ENCODE measurements at regions of chr12 and their contacts with region 1.

Region 1: GRCh38 chr12:56987551-56988053 is 18.7 kb downstream of the ZBTB39 start:
- DNase-seq: peak; percentile 60 to 96 (median 82)
- ATAC-seq: peak; percentile 89
- H3K4me3 ChIP-seq: no peak overlapping the region
- H3K27ac ChIP-seq: no peak overlapping the region
- H3K4me1 ChIP-seq: peaks cover 7 to 41% of the 10 kb centered on the region in 2 donors
- H3K27me3 ChIP-seq: no peaks in the 10 kb centered on the region
- CTCF ChIP-seq: peak; percentile 91 to 95

Region 2: GRCh38 chr12:56759263-56759908 is 228.2 kb before region 1 on chr12:
- intact Hi-C with region 1: loop called in 1 of 2 experiments (anchors 5 kb)
- DNase-seq: no peak
- ATAC-seq: no peak
- H3K4me3 ChIP-seq: no peak overlapping the region
- H3K27ac ChIP-seq: no peak overlapping the region
- H3K4me1 ChIP-seq: peaks cover 0 to 2% of the 10 kb centered on the region in 2 donors
- H3K27me3 ChIP-seq: no peaks in the 10 kb centered on the region
- CTCF ChIP-seq: no peak

Region 3: DNA sequence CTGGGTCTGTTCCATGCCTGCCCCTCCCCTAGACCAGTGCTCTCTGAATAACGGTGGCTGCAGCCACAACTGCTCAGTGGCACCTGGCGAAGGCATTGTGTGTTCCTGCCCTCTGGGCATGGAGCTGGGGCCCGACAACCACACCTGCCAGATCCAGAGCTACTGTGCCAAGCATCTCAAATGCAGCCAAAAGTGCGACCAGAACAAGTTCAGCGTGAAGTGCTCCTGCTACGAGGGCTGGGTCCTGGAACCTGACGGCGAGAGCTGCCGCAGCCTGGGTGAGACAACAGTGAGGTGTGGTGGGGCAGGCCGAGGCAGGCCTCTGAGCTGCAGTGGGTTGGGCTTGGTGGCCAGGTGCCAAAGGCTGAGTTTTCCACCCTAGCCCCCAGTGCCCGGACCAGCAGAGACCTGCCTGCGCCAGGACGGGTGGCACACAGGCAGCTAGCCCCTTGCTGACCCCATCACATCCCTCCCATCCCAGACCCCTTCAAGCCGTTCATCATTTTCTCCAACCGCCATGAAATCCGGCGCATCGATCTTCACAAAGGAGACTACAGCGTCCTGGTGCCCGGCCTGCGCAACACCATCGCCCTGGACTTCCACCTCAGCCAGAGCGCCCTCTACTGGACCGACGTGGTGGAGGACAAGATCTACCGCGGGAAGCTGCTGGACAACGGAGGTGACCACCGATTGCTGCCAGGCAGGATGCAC is 188.0 kb after region 1 on chr12:
- intact Hi-C with region 1: no loop called
- DNase-seq: peak in 2 of 4 donors; percentile 59 to 66
- ATAC-seq: peak; percentile 62
- H3K4me3 ChIP-seq: no peak overlapping the region
- H3K27ac ChIP-seq: no peak overlapping the region
- H3K4me1 ChIP-seq: no peaks in the 10 kb centered on the region
- H3K27me3 ChIP-seq: no peaks in the 10 kb centered on the region
- CTCF ChIP-seq: peak; percentile 42 to 58

Measured in left lung (tissue), 14 donors.